Cardiac septum (tissue), 1 donor: ENCODE measurements at regions of chr13 and their contacts with region 1.

Region 1: DNA sequence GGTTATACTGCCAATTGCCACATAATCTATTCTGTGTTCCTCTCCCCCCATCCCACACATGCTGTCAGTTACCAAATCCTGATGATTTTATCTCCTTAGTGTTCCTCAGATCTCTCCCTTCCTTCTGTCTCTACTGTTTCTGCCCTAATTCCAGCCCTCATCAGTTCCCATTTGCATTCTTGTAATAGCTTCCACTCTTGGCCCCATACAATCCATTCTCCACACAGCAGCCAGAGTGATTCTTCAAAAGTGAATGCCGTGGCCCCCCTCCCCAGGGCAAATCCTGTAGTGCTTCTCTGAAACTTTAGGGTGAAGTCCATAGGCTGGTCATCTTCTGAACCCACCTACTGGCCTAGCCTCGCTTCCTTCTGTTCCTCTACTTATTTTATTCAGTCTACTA is 114.4 kb downstream of the ZAR1L start:
- DNase-seq: no peak

Region 2: DNA sequence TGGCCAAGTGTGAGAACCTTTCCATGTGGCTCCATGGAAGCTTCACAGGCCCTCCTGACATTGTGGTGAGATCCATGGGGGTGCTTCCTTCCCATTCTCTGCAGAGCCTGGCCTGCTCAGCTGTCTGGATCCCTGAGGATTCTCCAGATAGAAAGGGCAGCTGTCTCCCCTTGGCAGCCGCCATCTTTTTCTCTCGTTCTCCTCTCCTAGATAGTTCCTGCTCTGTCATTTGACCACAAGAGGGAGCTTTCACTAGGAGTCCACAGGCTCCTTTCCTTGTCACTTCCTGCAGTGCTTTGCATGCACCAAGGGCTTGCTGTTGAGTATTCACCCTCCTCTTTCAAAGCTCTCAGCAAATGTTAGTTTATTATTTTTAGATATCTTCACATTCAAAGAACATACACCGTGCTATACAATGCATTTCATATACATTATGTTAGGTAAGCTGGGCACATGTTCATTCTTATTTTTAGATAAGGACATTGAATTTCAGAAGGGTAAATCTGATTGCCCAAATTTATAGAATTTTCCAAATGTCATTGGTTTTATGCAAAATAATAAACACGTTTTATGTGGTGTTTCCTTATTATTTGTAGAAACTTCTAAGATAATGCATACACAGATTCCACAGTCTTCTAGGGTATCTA is 36.0 kb before region 1 on chr13:
- intact Hi-C with region 1: loop called (anchors 5 kb)
- DNase-seq: no peak